ENCODE measurements at regions of chr6 and their contacts with region 1.

Region 1: DNA sequence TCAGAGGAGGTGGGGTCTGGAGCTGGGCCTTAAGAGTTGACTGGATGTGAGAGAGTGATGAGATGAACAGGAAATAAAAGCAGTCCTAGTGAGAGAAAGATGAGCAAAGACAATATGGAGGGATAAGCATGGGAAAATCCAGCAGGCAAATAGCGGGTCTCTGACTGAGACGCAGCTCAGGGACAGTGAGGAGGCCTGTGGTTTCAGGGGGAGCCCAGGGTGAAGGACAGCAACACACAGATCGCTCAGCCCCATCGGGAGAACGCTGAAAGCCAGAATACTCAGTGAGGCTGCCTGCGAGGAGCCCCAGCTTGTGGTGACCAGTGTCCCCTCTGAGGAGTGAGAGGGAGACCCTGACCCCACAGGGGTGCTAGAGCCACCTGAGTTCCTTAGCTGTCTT is 16.8 kb upstream of the DCDC2 start:
- DNase-seq: no peak

Region 2: GRCh38 chr6:24332306-24332705 is 42.3 kb before region 1 on chr6:
- CTCF ChIA-PET with region 1: no interaction called
- POLR2A ChIA-PET with region 1: no interaction called
- DNase-seq: no peak

Region 3: GRCh38 chr6:24391756-24392405 is 17.3 kb after region 1 on chr6:
- CTCF ChIA-PET with region 1: interaction called, 10 read pairs
- POLR2A ChIA-PET with region 1: interaction called, 4 read pairs
- DNase-seq: no peak